Activated B cell treated with CpG ODN at 0.5 μM for 24 hours (primary cell): ENCODE measurements at regions of chr16 and their contacts with region 1.

Region 1: GRCh38 chr16:85610508-85611332 is 2.4 kb upstream of the GSE1 start:
- DNase-seq: peak; percentile 89
- ATAC-seq: peak; percentile 62
- H3K4me3 Mint-ChIP-seq: peak overlapping the region; percentile 81
- H3K27ac Mint-ChIP-seq: peak overlapping the region; percentile 70
- H3K4me1 Mint-ChIP-seq: peaks cover 63% of the 10 kb centered on the region
- H3K27me3 Mint-ChIP-seq: no peaks in the 10 kb centered on the region
- CTCF ChIP-seq: peak; percentile 77

Region 2: DNA sequence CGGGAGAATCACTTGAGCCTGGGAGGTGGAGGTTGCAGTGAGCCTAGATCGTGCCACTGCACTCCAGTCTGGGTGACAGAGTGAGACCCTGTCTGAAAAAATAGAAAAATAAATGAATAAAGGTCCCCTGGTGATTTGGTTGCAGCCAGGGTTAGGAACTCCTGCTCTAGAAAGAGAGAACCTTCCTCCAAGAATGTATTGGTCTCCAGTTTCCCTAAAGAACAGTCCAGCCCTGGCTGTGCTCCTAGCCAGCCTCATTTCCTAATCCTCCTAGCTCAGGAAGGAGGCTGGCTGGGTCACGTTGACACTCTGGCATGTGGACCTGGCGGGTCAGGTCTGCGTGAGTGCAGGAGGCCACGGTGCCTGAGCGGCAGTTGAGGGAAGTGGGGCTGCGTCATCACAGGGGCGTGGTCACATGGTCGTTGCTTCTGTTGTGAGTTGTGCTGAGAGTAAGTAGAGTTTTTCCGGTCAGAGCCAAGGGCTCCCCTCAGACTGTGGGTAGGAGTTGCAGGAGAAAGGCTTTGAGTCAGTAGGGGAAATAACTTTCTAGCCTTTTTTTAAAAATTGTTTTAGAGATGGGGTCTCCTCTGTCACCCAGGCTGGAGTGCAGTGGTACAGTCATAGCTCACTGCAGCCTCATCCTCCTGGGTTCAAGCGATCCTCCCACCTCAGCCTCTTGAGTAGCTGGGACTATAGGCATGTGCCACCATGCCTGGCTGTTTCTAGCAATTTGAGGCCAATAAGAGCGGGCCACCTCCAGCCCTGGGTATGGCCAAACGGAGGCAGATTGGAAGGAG is 304.5 kb before region 1 on chr16:
- CTCF ChIA-PET with region 1: interaction called, 4 read pairs
- POLR2A ChIA-PET with region 1: interaction called, 10 read pairs
- intact Hi-C with region 1: loop called (anchors 1 kb)
- DNase-seq: peak; percentile 72
- ATAC-seq: peak; percentile 69
- H3K4me3 Mint-ChIP-seq: peak overlapping the region; percentile 29
- H3K27ac Mint-ChIP-seq: peak overlapping the region; percentile 71
- H3K4me1 Mint-ChIP-seq: peaks cover 64% of the 10 kb centered on the region
- H3K27me3 Mint-ChIP-seq: peaks cover 2% of the 10 kb centered on the region
- CTCF ChIP-seq: no peak

Region 3: GRCh38 chr16:85393674-85394483 is 216.8 kb before region 1 on chr16:
- CTCF ChIA-PET with region 1: interaction called, 4 read pairs
- POLR2A ChIA-PET with region 1: no interaction called
- intact Hi-C with region 1: loop called (anchors 1 kb)
- DNase-seq: peak; percentile 65
- ATAC-seq: peak; percentile 83
- H3K4me3 Mint-ChIP-seq: no peak overlapping the region
- H3K27ac Mint-ChIP-seq: no peak overlapping the region
- H3K4me1 Mint-ChIP-seq: no peaks in the 10 kb centered on the region
- H3K27me3 Mint-ChIP-seq: peaks cover 16% of the 10 kb centered on the region
- CTCF ChIP-seq: no peak

Region 4: GRCh38 chr16:85448557-85449197 is 162.0 kb before region 1 on chr16:
- CTCF ChIA-PET with region 1: interaction called, 16 read pairs
- POLR2A ChIA-PET with region 1: interaction called, 5 read pairs
- intact Hi-C with region 1: no loop called
- DNase-seq: peak; percentile 27
- ATAC-seq: no peak
- H3K4me3 Mint-ChIP-seq: peak overlapping the region; percentile 48
- H3K27ac Mint-ChIP-seq: no peak overlapping the region
- H3K4me1 Mint-ChIP-seq: peaks cover 25% of the 10 kb centered on the region
- H3K27me3 Mint-ChIP-seq: peaks cover 11% of the 10 kb centered on the region
- CTCF ChIP-seq: no peak

Region 5: GRCh38 chr16:85491058-85491771 is 119.5 kb before region 1 on chr16:
- CTCF ChIA-PET with region 1: interaction called, 16 read pairs
- POLR2A ChIA-PET with region 1: no interaction called
- intact Hi-C with region 1: loop called (anchors 1 kb)
- DNase-seq: peak; percentile 37
- ATAC-seq: peak; percentile 62
- H3K4me3 Mint-ChIP-seq: no peak overlapping the region
- H3K27ac Mint-ChIP-seq: no peak overlapping the region
- H3K4me1 Mint-ChIP-seq: no peaks in the 10 kb centered on the region
- H3K27me3 Mint-ChIP-seq: peaks cover 13% of the 10 kb centered on the region
- CTCF ChIP-seq: no peak

Region 6: DNA sequence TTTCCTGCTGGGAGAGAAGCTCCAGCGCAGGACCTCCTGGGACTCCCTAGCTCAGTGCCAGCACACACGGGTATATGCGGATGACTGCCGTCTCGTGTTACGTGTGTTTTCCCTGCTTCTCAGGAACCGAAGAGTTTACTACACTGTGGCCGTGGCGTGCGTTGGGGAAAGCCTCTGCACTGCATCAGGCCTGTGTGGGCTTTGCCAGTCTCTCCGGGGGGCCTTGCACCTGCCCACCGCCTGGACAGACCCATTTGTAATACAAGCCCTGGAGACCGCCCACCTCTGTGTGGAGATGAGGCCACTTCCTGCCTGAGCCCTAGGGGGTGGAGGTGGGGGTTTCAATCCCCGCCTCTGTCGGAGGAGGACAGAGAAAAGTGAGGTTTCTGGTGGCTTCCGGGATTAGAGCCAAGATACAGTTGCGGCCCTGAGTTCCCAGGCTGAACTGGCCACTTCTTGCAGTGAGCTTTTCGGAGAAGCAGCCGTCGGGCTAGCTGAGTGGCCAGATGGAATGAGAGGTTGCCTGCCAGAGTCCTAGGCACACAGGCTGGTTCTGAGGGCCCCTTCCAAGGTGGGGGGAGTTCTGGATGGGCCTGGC is 41.0 kb before region 1 on chr16:
- CTCF ChIA-PET with region 1: interaction called, 3 read pairs
- POLR2A ChIA-PET with region 1: interaction called, 5 read pairs
- intact Hi-C with region 1: loop called (anchors 1 kb)
- DNase-seq: no peak
- ATAC-seq: peak; percentile 53
- H3K4me3 Mint-ChIP-seq: peak overlapping the region; percentile 70
- H3K27ac Mint-ChIP-seq: peak overlapping the region; percentile 82
- H3K4me1 Mint-ChIP-seq: peaks cover 74% of the 10 kb centered on the region
- H3K27me3 Mint-ChIP-seq: no peaks in the 10 kb centered on the region
- CTCF ChIP-seq: no peak

Region 7: GRCh38 chr16:85888405-85889331 is 277.9 kb after region 1 on chr16:
- CTCF ChIA-PET with region 1: no interaction called
- POLR2A ChIA-PET with region 1: no interaction called
- intact Hi-C with region 1: no loop called
- DNase-seq: no peak
- ATAC-seq: peak; percentile 90
- H3K4me3 Mint-ChIP-seq: peak overlapping the region; percentile 44
- H3K27ac Mint-ChIP-seq: peak overlapping the region; percentile 90
- H3K4me1 Mint-ChIP-seq: peaks cover 46% of the 10 kb centered on the region
- H3K27me3 Mint-ChIP-seq: no peaks in the 10 kb centered on the region
- CTCF ChIP-seq: no peak

Region 8: GRCh38 chr16:85898521-85899442 is 288.1 kb after region 1 on chr16 and contains the start of gene IRF8:
- CTCF ChIA-PET with region 1: no interaction called
- POLR2A ChIA-PET with region 1: interaction called, 3 read pairs
- intact Hi-C with region 1: loop called (anchors 5 kb)
- DNase-seq: peak; percentile 89
- ATAC-seq: peak; percentile 64
- H3K4me3 Mint-ChIP-seq: peak within 1 kb of the TSS; percentile 84
- H3K27ac Mint-ChIP-seq: peak within 1 kb of the TSS; percentile 95
- H3K4me1 Mint-ChIP-seq: peaks cover 63% of the 10 kb centered on the region
- H3K27me3 Mint-ChIP-seq: no peaks in the 10 kb centered on the region
- CTCF ChIP-seq: no peak
- total RNA-seq, gene IRF8: 234 and 248 TPM in 2 replicates

Region 9: GRCh38 chr16:86181526-86181925 is 570.8 kb after region 1 on chr16:
- CTCF ChIA-PET with region 1: no interaction called
- POLR2A ChIA-PET with region 1: no interaction called
- intact Hi-C with region 1: no loop called
- DNase-seq: no peak
- ATAC-seq: no peak
- H3K4me3 Mint-ChIP-seq: no peak overlapping the region
- H3K27ac Mint-ChIP-seq: no peak overlapping the region
- H3K4me1 Mint-ChIP-seq: no peaks in the 10 kb centered on the region
- H3K27me3 Mint-ChIP-seq: no peaks in the 10 kb centered on the region
- CTCF ChIP-seq: no peak